ENCODE measurements at regions of chr14 and their contacts with region 1.

Region 1: GRCh38 chr14:61025251-61026223 is 44.5 kb downstream of the SLC38A6 start:
- DNase-seq: peak; percentile 66
- H3K4me3 Mint-ChIP-seq: no peak overlapping the region
- H3K27ac Mint-ChIP-seq: no peak overlapping the region
- H3K4me1 Mint-ChIP-seq: no peaks in the 10 kb centered on the region
- H3K27me3 Mint-ChIP-seq: no peaks in the 10 kb centered on the region

Region 2: DNA sequence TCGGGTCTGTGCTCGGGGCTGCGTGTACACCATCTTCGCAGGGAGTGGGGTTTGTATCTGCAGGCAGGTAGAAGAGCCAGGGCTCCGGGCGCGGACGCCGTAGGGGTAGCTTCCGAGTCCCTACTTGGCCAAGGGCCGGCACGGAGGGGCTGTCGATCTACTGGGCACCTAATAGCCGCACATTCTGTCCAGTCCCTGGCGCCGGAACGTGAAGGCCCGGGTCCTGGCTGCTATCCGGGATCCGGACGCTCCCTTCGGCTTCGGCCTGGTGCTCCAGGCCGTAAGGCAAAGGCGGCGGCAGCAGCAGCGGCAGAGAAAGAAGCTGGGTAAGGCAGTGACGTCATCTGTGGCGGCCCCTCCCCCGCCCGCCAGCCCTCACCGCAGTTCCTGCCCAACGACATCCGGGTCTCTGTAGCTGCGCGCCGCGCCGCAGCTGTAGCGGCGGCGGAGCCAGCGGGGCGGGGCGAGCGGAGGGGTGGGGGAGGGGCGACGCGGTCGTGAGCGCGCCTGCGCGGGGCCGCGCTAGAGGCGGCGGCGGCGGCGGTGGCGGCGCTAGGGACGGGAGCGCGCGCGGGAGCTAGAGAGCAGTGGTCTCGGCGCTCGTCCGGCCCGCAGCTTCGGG is 776.7 kb before region 1 on chr14 and contains the start of gene PPM1A:
- CTCF ChIA-PET with region 1: no interaction called
- POLR2A ChIA-PET with region 1: no interaction called
- intact Hi-C with region 1: no loop called
- DNase-seq: peak; percentile 97
- H3K4me3 Mint-ChIP-seq: peak within 1 kb of the TSS; percentile 94
- H3K27ac Mint-ChIP-seq: peak within 1 kb of the TSS; percentile 100
- H3K4me1 Mint-ChIP-seq: peaks cover 50% of the 10 kb centered on the region
- H3K27me3 Mint-ChIP-seq: no peaks in the 10 kb centered on the region
- total RNA-seq, gene PPM1A: 44.0 to 47.3 TPM

Region 3: DNA sequence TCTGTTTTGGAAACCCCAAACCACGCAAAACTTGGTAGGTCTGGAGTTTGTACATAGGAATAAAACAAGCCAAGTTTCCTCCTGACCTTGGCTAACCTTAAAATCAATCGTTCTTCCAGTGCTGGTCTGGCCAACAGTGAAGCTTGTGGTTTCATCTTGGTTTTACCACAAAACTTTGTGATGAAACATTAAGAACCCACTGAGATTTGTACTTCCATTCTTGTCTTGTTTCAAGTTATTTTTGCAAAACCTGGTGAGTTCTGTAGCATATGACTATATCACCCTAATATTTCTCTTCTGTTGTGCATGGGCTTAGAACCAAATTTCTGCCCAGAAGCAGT is 402.6 kb before region 1 on chr14:
- CTCF ChIA-PET with region 1: interaction called, 31 read pairs
- POLR2A ChIA-PET with region 1: no interaction called
- intact Hi-C with region 1: loop called (anchors 1 kb)
- DNase-seq: no peak
- H3K4me3 Mint-ChIP-seq: no peak overlapping the region
- H3K27ac Mint-ChIP-seq: no peak overlapping the region
- H3K4me1 Mint-ChIP-seq: no peaks in the 10 kb centered on the region
- H3K27me3 Mint-ChIP-seq: peaks cover 20% of the 10 kb centered on the region

Region 4: GRCh38 chr14:60656686-60657455 is 368.7 kb before region 1 on chr14:
- CTCF ChIA-PET with region 1: interaction called, 10 read pairs
- POLR2A ChIA-PET with region 1: no interaction called
- intact Hi-C with region 1: loop called (anchors 1 kb)
- DNase-seq: peak; percentile 36
- H3K4me3 Mint-ChIP-seq: peak overlapping the region; percentile 71
- H3K27ac Mint-ChIP-seq: no peak overlapping the region
- H3K4me1 Mint-ChIP-seq: peaks cover 44% of the 10 kb centered on the region
- H3K27me3 Mint-ChIP-seq: peaks cover 73% of the 10 kb centered on the region

Region 5: DNA sequence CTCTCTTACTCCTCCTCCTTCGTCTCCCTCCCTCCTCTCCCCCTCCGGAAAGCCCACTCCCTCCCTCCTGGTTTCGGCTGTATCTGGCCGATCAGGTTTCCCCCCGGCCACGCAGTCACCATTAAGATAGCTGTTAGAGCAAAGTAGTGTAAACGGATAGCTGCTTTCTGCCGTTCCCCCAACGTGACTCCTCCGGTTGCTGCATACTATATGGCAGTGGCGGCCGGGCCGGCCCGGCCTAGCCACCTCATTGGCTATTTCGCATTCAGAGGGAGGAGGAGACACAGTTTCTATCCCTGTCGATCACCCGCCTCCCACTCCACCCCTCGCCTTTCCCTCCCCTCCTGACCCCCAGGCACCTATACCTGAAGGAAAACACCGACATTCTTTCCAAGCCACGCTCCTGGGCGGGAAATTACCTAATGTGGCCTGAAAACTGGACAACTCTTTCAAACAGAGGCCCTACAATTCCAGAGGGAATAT is 301.4 kb before region 1 on chr14 and contains the start of gene SIX4:
- CTCF ChIA-PET with region 1: interaction called, 3 read pairs
- POLR2A ChIA-PET with region 1: no interaction called
- intact Hi-C with region 1: loop called (anchors 2 kb)
- DNase-seq: peak; percentile 34
- H3K4me3 Mint-ChIP-seq: peak within 1 kb of the TSS; percentile 79
- H3K27ac Mint-ChIP-seq: no peak within 1 kb of the TSS
- H3K4me1 Mint-ChIP-seq: peaks cover 11% of the 10 kb centered on the region
- H3K27me3 Mint-ChIP-seq: peaks cover 71% of the 10 kb centered on the region
- total RNA-seq, gene SIX4: 0.17 TPM in 1 of 2 experiments, not detected in the other

Region 6: GRCh38 chr14:60989599-60989998 is 35.9 kb before region 1 on chr14:
- CTCF ChIA-PET with region 1: no interaction called
- POLR2A ChIA-PET with region 1: no interaction called
- intact Hi-C with region 1: no loop called
- DNase-seq: no peak
- H3K4me3 Mint-ChIP-seq: no peak overlapping the region
- H3K27ac Mint-ChIP-seq: no peak overlapping the region
- H3K4me1 Mint-ChIP-seq: no peaks in the 10 kb centered on the region
- H3K27me3 Mint-ChIP-seq: no peaks in the 10 kb centered on the region

Region 7: GRCh38 chr14:61064210-61064609 is 38.7 kb after region 1 on chr14:
- CTCF ChIA-PET with region 1: no interaction called
- POLR2A ChIA-PET with region 1: no interaction called
- intact Hi-C with region 1: no loop called
- DNase-seq: no peak
- H3K4me3 Mint-ChIP-seq: no peak overlapping the region
- H3K27ac Mint-ChIP-seq: no peak overlapping the region
- H3K4me1 Mint-ChIP-seq: no peaks in the 10 kb centered on the region
- H3K27me3 Mint-ChIP-seq: no peaks in the 10 kb centered on the region

Region 8: GRCh38 chr14:61188978-61189808 is 163.7 kb after region 1 on chr14:
- CTCF ChIA-PET with region 1: interaction called, 3 read pairs
- POLR2A ChIA-PET with region 1: no interaction called
- intact Hi-C with region 1: loop called (anchors 5 kb)
- DNase-seq: peak; percentile 69
- H3K4me3 Mint-ChIP-seq: peak overlapping the region; percentile 70
- H3K27ac Mint-ChIP-seq: no peak overlapping the region
- H3K4me1 Mint-ChIP-seq: peaks cover 13% of the 10 kb centered on the region
- H3K27me3 Mint-ChIP-seq: peaks cover 32% of the 10 kb centered on the region

Region 9: GRCh38 chr14:61252369-61253063 is 227.0 kb after region 1 on chr14:
- CTCF ChIA-PET with region 1: interaction called, 5 read pairs
- POLR2A ChIA-PET with region 1: no interaction called
- intact Hi-C with region 1: loop called (anchors 1 kb)
- DNase-seq: peak; percentile 76
- H3K4me3 Mint-ChIP-seq: no peak overlapping the region
- H3K27ac Mint-ChIP-seq: no peak overlapping the region
- H3K4me1 Mint-ChIP-seq: peaks cover 8% of the 10 kb centered on the region
- H3K27me3 Mint-ChIP-seq: peaks cover 9% of the 10 kb centered on the region

Measured in activated CD4-positive, alpha-beta memory T cell treated with anti-CD3 and anti-CD28 coated beads for 36 hours (primary cell).